ENCODE measurements at regions of chr1 and their contacts with region 1.

Region 1: GRCh38 chr1:76901158-76901767 is 34.0 kb downstream of the ST6GALNAC5 start:
- DNase-seq: peak; percentile 10
- H3K4me3 Mint-ChIP-seq: no peak overlapping the region
- H3K27ac Mint-ChIP-seq: no peak overlapping the region
- H3K4me1 Mint-ChIP-seq: no peaks in the 10 kb centered on the region
- H3K27me3 Mint-ChIP-seq: no peaks in the 10 kb centered on the region

Region 2: DNA sequence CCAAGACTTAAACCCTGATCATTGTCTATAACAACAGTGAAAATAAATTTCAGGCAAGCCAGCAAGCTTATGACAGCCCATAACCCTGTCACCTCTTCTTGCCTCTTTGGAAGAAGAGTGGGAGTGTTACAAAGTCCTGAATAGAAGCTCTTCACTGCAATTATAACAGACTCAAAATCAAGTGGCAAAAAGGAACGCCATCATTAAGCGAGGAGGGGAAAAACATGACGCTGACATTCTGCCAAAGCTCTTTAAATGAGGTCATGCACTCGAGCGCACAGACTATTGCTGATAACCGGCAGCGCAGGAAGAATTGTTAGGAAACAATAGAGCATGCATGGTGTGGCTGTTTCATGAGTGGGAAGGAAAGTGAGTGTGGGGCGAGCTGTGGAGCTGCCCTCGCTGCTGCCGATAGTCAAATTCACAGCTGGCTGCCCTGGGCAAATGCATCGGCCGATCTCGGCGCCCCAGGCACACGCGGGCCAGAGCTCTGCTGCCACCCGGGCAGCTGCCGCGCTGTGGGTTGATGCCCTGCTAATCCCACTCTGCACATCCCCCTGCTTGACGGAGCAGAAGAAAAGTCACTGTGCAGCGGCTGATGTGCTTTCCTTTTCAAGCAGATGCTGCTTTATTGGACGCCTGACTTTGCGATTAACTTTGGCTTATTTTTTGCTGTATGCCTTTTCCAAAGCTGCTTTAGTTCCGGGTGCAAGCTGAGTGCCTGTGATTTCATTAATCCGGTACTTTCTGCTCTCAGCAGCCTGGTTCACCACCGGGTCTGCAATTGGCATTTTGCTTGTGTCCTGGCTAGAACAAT is 136.4 kb before region 1 on chr1:
- intact Hi-C with region 1: no loop called
- DNase-seq: no peak
- H3K4me3 Mint-ChIP-seq: no peak overlapping the region
- H3K27ac Mint-ChIP-seq: no peak overlapping the region
- H3K4me1 Mint-ChIP-seq: no peaks in the 10 kb centered on the region
- H3K27me3 Mint-ChIP-seq: no peaks in the 10 kb centered on the region

Region 3: DNA sequence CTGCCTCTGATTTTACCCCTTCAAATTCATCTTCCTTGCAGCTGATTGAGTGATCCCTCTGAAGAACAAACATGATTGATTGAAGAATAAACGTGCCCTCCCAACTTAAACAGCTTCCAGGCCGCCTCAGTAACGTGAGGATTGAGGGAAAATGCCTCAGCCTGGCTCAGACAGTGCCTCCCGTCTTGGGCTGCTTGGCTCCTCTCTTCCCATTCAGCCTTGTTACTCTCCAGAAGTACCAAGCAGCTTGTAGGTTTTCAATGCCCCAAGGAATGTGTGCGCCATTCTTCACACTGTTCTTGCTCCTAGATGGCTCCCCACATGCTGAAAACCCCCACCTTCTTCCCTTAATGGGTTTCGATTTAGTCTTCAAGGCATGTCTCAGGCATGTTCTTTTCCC is 17.8 kb after region 1 on chr1:
- intact Hi-C with region 1: no loop called
- DNase-seq: no peak
- H3K4me3 Mint-ChIP-seq: no peak overlapping the region
- H3K27ac Mint-ChIP-seq: no peak overlapping the region
- H3K4me1 Mint-ChIP-seq: no peaks in the 10 kb centered on the region
- H3K27me3 Mint-ChIP-seq: no peaks in the 10 kb centered on the region

Region 4: DNA sequence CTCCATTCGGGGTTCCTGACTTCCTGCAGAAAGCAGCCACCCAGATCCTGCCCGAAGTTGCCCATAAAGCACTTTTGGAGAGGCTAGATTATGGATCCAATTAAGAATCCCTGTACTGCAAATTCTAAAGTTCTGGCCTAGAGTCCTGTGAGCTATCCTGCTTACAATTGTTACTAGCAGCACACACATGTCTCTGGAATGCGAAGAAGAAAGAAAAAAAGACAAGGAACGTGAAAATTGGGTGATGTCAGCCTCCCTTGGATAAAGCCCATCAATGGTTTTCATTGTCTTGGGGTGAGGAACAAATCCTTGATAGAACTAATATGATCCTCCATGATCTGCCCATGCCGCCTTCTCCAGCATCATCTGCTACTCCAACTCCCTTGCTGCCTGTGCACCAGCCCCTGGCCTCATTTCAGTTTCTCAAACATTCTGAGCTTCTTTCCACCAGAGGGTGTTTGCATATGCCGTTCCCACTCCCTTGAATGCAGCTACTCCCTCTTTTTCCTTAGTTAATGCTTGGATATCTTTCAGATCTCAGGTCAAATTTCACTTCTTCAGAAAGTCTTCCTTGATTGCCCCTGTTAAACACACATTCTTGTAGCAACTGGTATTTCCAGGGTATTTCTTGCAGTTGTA is 60.0 kb after region 1 on chr1:
- intact Hi-C with region 1: no loop called
- DNase-seq: no peak
- H3K4me3 Mint-ChIP-seq: no peak overlapping the region
- H3K27ac Mint-ChIP-seq: no peak overlapping the region
- H3K4me1 Mint-ChIP-seq: no peaks in the 10 kb centered on the region
- H3K27me3 Mint-ChIP-seq: no peaks in the 10 kb centered on the region

Region 5: DNA sequence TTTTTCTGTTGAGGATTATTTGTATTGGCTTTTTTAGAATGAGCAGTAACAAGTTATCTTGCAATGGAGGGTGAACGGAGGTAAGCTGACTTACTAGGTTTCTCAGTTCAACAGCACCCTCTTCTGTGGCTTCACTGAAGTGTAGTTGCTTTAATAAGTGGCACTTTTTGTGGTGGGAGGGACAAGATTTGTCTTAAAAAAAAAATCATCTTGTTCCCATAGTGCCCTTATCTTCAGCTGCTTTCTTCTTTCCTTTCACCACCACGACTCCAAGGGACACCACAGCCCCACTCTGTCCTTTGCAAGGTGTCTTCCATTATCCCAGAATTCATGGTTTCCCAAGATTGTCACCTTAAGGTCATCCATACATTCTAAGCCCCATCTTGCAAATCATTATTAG is 225.0 kb after region 1 on chr1:
- intact Hi-C with region 1: loop called (anchors 2 kb)
- DNase-seq: no peak
- H3K4me3 Mint-ChIP-seq: no peak overlapping the region
- H3K27ac Mint-ChIP-seq: no peak overlapping the region
- H3K4me1 Mint-ChIP-seq: no peaks in the 10 kb centered on the region
- H3K27me3 Mint-ChIP-seq: no peaks in the 10 kb centered on the region

Measured in activated T-helper 2 cell treated with anti-CD3 and anti-CD28 coated beads, Interferon-gamma antibody, Interleukin-2, Interleukin-4, amounts not matched to agents 10 μg/mL and 5 μg/mL and 100 μg/mL, durations not matched to agents 14 hours and 24 hours and 36 hours (primary cell).